ENCODE measurements at regions of chr15 and their contacts with region 1.

Region 1: GRCh38 chr15:64731012-64731806 is 44.2 kb downstream of the RBPMS2 start:
- DNase-seq: peak; percentile 93
- ATAC-seq: peak; percentile 84
- H3K4me3 Mint-ChIP-seq: no peak overlapping the region
- H3K27ac Mint-ChIP-seq: no peak overlapping the region
- H3K4me1 Mint-ChIP-seq: peaks cover 6% of the 10 kb centered on the region
- H3K27me3 Mint-ChIP-seq: peaks cover 2% of the 10 kb centered on the region
- CTCF ChIP-seq: peak; percentile 96

Region 2: GRCh38 chr15:64426845-64427465 is 304.3 kb before region 1 on chr15:
- CTCF ChIA-PET with region 1: interaction called, 12 read pairs
- POLR2A ChIA-PET with region 1: no interaction called
- intact Hi-C with region 1: no loop called
- DNase-seq: no peak
- ATAC-seq: no peak
- H3K4me3 Mint-ChIP-seq: no peak overlapping the region
- H3K27ac Mint-ChIP-seq: peak overlapping the region; percentile 61
- H3K4me1 Mint-ChIP-seq: peaks cover 40% of the 10 kb centered on the region
- H3K27me3 Mint-ChIP-seq: no peaks in the 10 kb centered on the region
- CTCF ChIP-seq: peak; percentile 52

Region 3: GRCh38 chr15:64635499-64636495 is 95.4 kb before region 1 on chr15:
- CTCF ChIA-PET with region 1: no interaction called
- POLR2A ChIA-PET with region 1: no interaction called
- intact Hi-C with region 1: no loop called
- DNase-seq: no peak
- ATAC-seq: no peak
- H3K4me3 Mint-ChIP-seq: no peak overlapping the region
- H3K27ac Mint-ChIP-seq: peak overlapping the region; percentile 82
- H3K4me1 Mint-ChIP-seq: peaks cover 70% of the 10 kb centered on the region
- H3K27me3 Mint-ChIP-seq: no peaks in the 10 kb centered on the region
- CTCF ChIP-seq: no peak

Region 4: DNA sequence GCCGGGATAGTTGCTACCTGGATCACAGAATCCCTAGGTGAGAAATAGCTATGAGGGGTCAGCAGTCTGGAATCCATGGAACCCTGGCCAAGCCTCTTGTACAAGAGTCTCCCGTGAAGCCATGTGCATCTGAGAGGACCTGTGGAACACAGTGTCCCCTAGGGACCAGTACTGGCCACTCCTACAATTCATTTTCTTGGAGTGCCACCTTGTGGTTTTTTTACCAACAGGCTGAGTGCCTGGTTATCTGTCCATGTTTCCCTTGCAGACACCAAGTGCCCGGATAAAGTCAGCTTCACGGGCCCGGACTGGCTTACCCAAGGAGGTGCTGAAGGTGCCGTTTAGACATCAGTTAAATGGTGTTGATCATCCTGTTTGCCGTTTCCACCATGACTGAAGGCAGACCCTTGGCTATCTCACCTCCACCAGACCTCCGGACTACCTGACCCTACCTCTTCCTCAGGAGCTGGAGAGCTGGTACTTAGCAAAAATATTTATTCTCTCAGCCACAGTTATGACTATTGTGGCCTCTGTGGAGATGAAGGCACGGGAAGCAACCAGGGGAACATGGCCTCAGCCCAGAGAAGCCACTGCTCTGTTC is 49.7 kb before region 1 on chr15:
- CTCF ChIA-PET with region 1: interaction called, 249 read pairs
- POLR2A ChIA-PET with region 1: interaction called, 4 read pairs
- intact Hi-C with region 1: loop called (anchors 1 kb)
- DNase-seq: peak; percentile 24
- ATAC-seq: peak; percentile 65
- H3K4me3 Mint-ChIP-seq: no peak overlapping the region
- H3K27ac Mint-ChIP-seq: peak overlapping the region; percentile 34
- H3K4me1 Mint-ChIP-seq: peaks cover 4% of the 10 kb centered on the region
- H3K27me3 Mint-ChIP-seq: no peaks in the 10 kb centered on the region
- CTCF ChIP-seq: peak; percentile 40

Region 5: GRCh38 chr15:64699751-64700388 is 31.3 kb before region 1 on chr15:
- CTCF ChIA-PET with region 1: interaction called, 81 read pairs
- POLR2A ChIA-PET with region 1: interaction called, 4 read pairs
- intact Hi-C with region 1: no loop called
- DNase-seq: no peak
- ATAC-seq: no peak
- H3K4me3 Mint-ChIP-seq: no peak overlapping the region
- H3K27ac Mint-ChIP-seq: no peak overlapping the region
- H3K4me1 Mint-ChIP-seq: peaks cover 62% of the 10 kb centered on the region
- H3K27me3 Mint-ChIP-seq: no peaks in the 10 kb centered on the region
- CTCF ChIP-seq: no peak

Region 6: DNA sequence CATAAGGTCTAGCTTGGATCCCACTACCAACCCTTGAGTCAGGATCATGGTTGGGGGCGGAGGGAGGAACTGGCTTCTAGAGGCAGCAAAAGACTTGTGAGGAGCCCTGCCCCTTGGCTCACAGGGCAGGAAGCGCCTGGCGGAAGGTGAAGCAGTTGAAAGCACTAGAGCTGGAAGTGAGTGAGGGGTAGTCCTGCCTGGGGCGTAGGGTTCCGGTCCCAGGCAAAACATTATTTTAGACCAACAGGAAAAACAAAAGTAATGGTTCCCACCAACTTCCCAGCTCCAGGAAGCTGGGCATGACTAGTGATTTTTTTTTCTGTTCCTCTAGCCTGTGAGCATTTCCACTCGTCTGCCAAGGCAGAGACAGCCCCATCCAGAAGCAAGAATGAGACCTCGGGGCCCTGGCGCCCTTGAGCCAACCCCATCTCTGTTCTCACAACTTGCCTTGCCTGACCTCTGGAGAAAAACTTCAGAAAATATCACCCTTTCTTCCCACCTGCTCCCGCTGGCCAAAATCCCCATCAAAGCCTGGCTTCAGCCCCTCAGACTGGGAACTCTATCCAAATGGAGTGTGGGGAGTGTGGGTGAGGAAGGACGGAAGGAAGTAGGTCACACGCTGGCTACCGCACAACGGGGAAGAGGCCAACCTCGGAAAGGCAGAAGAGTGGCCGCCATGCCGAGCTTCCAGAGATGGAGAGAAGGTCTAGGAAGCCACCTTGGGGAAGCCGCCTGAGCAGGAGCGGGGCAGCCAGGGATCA is 13.3 kb before region 1 on chr15:
- CTCF ChIA-PET with region 1: interaction called, 30 read pairs
- POLR2A ChIA-PET with region 1: no interaction called
- intact Hi-C with region 1: no loop called
- DNase-seq: peak; percentile 26
- ATAC-seq: no peak
- H3K4me3 Mint-ChIP-seq: no peak overlapping the region
- H3K27ac Mint-ChIP-seq: peak overlapping the region; percentile 15
- H3K4me1 Mint-ChIP-seq: peaks cover 21% of the 10 kb centered on the region
- H3K27me3 Mint-ChIP-seq: no peaks in the 10 kb centered on the region
- CTCF ChIP-seq: no peak

Region 7: GRCh38 chr15:64809649-64810496 is 78.7 kb after region 1 on chr15:
- CTCF ChIA-PET with region 1: interaction called, 106 read pairs
- POLR2A ChIA-PET with region 1: no interaction called
- intact Hi-C with region 1: loop called (anchors 5 kb)
- DNase-seq: peak; percentile 84
- ATAC-seq: peak; percentile 80
- H3K4me3 Mint-ChIP-seq: no peak overlapping the region
- H3K27ac Mint-ChIP-seq: no peak overlapping the region
- H3K4me1 Mint-ChIP-seq: no peaks in the 10 kb centered on the region
- H3K27me3 Mint-ChIP-seq: no peaks in the 10 kb centered on the region
- CTCF ChIP-seq: peak; percentile 98

Region 8: GRCh38 chr15:64905119-64905831 is 174.1 kb after region 1 on chr15:
- CTCF ChIA-PET with region 1: interaction called, 8 read pairs
- POLR2A ChIA-PET with region 1: no interaction called
- intact Hi-C with region 1: loop called (anchors 5 kb)
- DNase-seq: peak; percentile 88
- ATAC-seq: peak; percentile 95
- H3K4me3 Mint-ChIP-seq: peak overlapping the region; percentile 69
- H3K27ac Mint-ChIP-seq: peak overlapping the region; percentile 49
- H3K4me1 Mint-ChIP-seq: peaks cover 27% of the 10 kb centered on the region
- H3K27me3 Mint-ChIP-seq: no peaks in the 10 kb centered on the region
- CTCF ChIP-seq: peak; percentile 89

Measured in activated CD8-positive, alpha-beta T cell treated with anti-CD3 and anti-CD28 coated beads for 36 hours (primary cell).